A549 (cell line): ENCODE measurements at regions of chr17 and their contacts with region 1.

Region 1: DNA sequence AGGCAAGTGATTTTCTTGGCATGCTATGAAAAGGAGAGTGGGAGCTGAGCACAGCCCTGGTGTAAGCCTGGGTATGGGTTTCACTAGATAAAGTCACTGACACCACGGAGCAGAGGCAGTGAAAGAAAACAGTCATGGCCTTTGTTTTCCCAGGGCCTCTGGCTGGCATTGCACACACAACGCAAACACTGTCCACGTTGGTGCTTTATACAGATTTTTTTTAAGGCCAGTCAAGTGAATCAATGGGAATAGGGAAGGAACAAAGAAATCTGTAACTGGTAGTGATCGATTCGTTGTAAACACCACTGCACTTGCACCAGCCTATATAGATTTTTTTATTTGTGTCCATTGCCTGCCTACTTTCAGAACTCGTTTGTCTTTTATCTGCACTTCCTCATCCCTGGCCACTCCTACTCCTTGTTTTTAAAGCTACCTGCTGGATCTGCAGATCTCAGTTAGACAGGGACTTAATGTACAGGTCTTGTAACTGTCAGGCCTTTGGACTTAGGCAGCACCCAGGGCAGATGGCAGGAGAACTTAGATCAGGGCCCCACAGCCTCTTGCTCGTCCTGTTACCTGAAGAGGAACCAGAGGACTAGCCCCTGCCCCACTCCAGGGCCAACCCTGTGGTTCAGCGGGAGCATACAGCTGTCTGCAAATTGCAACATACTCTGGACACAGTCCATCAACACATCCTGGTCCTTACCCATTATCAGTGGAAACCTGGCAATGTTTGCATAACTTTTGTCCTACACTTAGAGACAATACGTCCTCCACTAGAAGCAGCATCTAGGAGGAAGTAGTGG is 10.6 kb upstream of the TMIGD1 start:
- DNase-seq: peak in 1 of 2 experiments; percentile 85
- ATAC-seq: peak; percentile 66 to 70
- H3K4me3 ChIP-seq: no peak overlapping the region
- H3K27ac ChIP-seq: peak overlapping the region; percentile 77 to 82
- H3K4me1 ChIP-seq: peaks cover 44% of the 10 kb centered on the region
- CTCF ChIP-seq: no peak
- EP300 ChIP-seq: no peak; a peak in 1 of 5 replicates
- POLR2A ChIP-seq: no peak
- RAD21 ChIP-seq: no peak

Region 2: DNA sequence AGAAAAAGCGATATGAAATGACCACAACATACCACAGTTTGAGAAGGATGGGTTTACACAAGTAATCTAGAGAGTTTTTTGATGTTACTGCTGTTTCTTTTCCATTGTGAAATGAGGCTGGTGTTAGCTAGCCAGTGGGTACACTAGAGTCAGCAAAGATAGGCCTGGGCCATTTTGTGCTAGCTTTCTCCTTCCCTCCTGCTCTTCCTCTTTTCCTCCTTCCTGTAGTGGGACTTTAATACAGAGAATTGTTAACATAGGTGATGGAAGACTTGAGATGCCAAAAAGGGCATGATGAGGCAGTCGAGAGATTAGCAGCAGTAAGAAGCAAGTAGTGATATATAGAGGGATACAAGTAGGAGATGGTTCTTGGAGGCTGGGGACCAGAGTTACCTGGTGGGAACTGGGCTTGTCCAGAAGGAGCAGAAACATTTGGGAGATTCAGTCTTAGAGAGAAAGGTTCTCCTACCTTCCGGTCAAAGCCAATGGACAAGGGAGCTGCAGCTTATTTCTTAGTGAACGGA is 220.2 kb before region 1 on chr17:
- CTCF ChIA-PET with region 1: interaction called, 32 read pairs
- POLR2A ChIA-PET with region 1: no interaction called
- DNase-seq: no peak
- ATAC-seq: peak in 1 of 2 experiments; percentile 55; a peak in 3 of 6 replicates
- H3K4me3 ChIP-seq: no peak overlapping the region
- H3K27ac ChIP-seq: no peak overlapping the region
- H3K4me1 ChIP-seq: peaks cover 13% of the 10 kb centered on the region; the same call in 2 of the 3 replicates
- CTCF ChIP-seq: no peak
- EP300 ChIP-seq: no peak
- POLR2A ChIP-seq: no peak
- RAD21 ChIP-seq: no peak

Region 3: DNA sequence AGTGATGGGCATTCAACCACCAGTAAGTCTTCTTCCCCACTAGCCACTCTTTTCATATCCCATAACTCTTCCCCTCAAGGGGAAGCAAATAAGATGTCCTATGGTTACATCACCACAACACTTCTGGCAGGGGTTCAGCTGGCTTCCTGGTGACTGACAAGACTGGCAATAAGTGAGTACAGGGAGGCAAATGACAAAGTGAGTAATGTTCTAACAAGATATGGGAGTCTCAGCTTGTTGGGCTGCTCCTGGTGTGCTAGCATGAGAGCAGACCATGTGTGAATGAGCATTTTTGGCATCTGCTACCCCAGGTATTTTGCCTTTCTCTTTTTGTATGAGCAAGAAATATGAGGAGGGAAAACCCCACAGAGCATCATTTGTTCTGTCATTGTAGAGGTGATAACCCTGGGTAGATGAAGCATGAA is 20.6 kb before region 1 on chr17:
- CTCF ChIA-PET with region 1: interaction called, 59 read pairs
- POLR2A ChIA-PET with region 1: no interaction called
- DNase-seq: peak in 1 of 2 experiments; percentile 43
- ATAC-seq: peak; percentile 49 to 68
- H3K4me3 ChIP-seq: no peak overlapping the region
- H3K27ac ChIP-seq: peak overlapping the region; percentile 33 to 48; a peak in 4 of 6 replicates
- H3K4me1 ChIP-seq: peaks cover 30% of the 10 kb centered on the region
- CTCF ChIP-seq: no peak
- EP300 ChIP-seq: no peak
- POLR2A ChIP-seq: no peak
- RAD21 ChIP-seq: no peak

Region 4: GRCh38 chr17:30360086-30360808 is 15.8 kb after region 1 on chr17:
- CTCF ChIA-PET with region 1: interaction called, 23 read pairs
- POLR2A ChIA-PET with region 1: interaction called, 3 read pairs
- DNase-seq: no peak
- ATAC-seq: no peak
- H3K4me3 ChIP-seq: no peak overlapping the region
- H3K27ac ChIP-seq: no peak overlapping the region
- H3K4me1 ChIP-seq: peaks cover 8% of the 10 kb centered on the region; the same call in 2 of the 3 replicates
- CTCF ChIP-seq: no peak
- EP300 ChIP-seq: no peak
- POLR2A ChIP-seq: no peak
- RAD21 ChIP-seq: no peak

Region 5: DNA sequence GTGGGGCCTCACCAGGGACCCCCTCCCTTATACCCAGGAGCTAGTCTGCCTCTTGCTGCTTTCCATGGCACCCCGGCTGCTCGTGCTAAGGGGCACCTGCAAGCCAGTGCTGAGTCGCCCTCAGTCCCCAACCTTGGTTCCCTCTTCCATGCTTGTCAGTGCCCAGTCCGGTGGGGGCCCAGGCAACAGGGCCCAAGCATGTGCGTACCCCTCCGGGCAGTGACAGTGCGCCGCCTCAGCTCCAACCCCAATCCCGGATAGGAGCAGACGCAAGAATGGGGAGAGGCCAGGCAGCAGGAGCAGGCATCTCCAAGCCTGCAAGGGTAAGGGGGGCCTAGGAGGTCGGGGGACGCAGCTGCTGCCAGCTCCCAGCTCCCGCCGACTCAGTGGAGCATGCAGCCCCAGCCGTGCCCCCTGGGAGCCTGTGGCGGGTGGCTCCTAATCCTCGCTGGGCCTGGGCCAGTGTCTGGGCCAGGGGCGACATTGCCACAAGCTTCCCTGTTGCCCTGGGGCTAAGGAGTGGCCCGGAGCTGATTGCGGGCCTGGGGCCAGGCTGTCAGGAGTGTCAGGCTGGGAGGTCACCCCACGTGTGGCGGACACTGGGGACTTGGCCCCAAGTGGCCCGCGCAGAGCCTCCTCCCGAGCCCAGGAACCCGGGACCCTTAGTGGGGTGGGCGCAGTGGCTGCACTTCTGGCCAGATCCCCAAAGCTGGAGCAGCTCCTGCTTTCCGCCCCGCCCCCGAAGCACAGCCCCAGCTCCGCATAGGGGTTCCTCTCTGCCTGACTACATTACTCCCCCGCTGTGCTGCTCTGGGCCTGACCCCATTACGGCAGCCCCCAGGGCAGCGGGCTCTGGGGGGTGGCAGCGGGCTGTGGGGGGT is 44.1 kb after region 1 on chr17:
- CTCF ChIA-PET with region 1: interaction called, 18 read pairs
- POLR2A ChIA-PET with region 1: no interaction called
- DNase-seq: no peak
- ATAC-seq: peak in 1 of 2 experiments; percentile 19; a peak in 3 of 6 replicates
- H3K4me3 ChIP-seq: no peak overlapping the region
- H3K27ac ChIP-seq: peak overlapping the region in 1 of 2 experiments; percentile 42; a peak in 2 of 6 replicates
- H3K4me1 ChIP-seq: peaks cover 15% of the 10 kb centered on the region; the same call in 2 of the 3 replicates
- CTCF ChIP-seq: no peak
- EP300 ChIP-seq: no peak
- POLR2A ChIP-seq: peak; percentile 21; the same call in 1 of the 2 replicates
- RAD21 ChIP-seq: no peak